Adrenal gland (tissue), 19 donors: ENCODE measurements at regions of chr6 and their contacts with region 1.

Region 1: GRCh38 chr6:130843575-130844320 is 16.5 kb downstream of the SMLR1 start:
- DNase-seq: no peak
- H3K4me3 ChIP-seq: no peak overlapping the region
- H3K27ac ChIP-seq: no peak overlapping the region
- H3K4me1 ChIP-seq: no peaks in the 10 kb centered on the region
- H3K27me3 ChIP-seq: no peaks in the 10 kb centered on the region
- CTCF ChIP-seq: peak; percentile 31 to 73 (median 66)
- POLR2A ChIP-seq: no peak

Region 2: DNA sequence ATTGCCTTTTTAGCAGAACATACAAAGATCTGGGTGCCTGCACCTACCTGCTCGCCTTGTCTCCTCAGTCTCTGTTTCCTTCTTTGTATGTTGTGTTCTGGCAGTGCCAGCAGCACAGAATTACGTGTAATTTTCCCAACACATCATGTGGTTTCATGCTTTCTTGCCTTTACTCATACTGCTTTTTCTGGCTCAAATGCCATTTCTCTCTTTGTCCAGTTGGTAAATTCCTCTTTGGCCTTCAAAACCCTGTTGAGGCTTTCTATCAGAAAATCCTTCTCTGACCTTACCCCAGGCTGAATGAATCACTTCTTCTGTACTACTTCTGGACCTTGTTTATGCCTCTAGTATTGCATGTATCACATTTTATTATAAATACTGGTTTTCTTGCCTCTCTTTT is 793.5 kb before region 1 on chr6:
- intact Hi-C with region 1: loop called in 1 of 2 experiments (anchors 10 kb)
- DNase-seq: peak in 3 of 7 donors; percentile 25 to 50 (median 35)
- H3K4me3 ChIP-seq: no peak overlapping the region
- H3K27ac ChIP-seq: peak overlapping the region in 4 of 5 donors; percentile 51 to 75 (median 61)
- H3K4me1 ChIP-seq: peaks cover 11 to 12% of the 10 kb centered on the region in 2 donors
- H3K27me3 ChIP-seq: no peaks in the 10 kb centered on the region
- CTCF ChIP-seq: peak in 1 of 6 experiments; percentile 5
- POLR2A ChIP-seq: no peak

Region 3: DNA sequence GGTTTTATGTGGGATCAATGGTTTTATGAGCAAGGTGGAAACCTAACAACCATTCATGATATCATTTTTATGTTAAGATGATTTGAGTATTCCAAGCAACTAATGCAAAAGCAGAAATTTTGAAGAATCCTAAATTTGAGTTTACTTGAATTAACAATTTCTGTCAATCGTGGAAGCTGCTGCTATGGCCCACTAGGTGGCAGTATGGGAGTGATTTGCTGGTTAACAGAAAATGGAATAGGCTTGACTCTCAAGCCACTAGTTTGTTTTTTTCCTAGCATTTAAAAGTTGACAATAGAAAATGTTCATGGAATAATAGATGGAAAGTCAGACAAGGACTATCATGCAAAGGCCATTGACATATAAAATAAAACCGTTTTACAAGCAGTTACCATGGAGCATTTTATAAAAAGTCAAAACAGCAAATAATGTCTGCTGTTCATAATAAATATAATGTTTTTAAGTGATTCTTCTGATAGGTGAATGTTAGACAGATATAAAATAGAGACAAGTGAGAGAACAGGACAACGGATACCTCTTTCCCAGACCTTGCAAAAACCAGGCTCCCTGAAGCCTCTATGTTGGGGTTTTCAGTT is 521.0 kb before region 1 on chr6:
- intact Hi-C with region 1: loop called in 1 of 2 experiments (anchors 10 kb)
- DNase-seq: peak; percentile 37 to 82 (median 57)
- H3K4me3 ChIP-seq: no peak overlapping the region
- H3K27ac ChIP-seq: no peak overlapping the region
- H3K4me1 ChIP-seq: no peaks in the 10 kb centered on the region
- H3K27me3 ChIP-seq: no peaks in the 10 kb centered on the region
- CTCF ChIP-seq: peak; percentile 74 to 92 (median 86)
- POLR2A ChIP-seq: no peak

Region 4: DNA sequence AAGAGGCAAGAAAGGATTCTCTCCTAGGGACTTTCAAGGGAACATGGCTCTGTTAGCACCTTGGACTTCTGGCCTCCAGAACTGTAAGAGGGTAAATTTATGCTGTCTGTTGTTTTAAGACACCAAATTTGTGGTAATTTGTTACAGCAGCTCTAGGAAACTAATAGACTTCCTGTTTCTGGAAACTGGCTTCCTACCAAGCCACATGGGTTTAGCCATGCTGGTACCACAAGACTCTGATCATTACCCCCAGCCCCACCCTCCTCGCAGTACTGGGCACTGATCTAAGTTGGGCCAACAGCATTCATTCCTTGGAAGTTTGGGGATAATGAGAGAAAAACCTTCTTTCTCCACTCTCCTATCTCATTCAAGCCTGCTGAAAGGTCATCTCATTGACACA is 126.1 kb before region 1 on chr6:
- intact Hi-C with region 1: no loop called
- DNase-seq: no peak
- H3K4me3 ChIP-seq: no peak overlapping the region
- H3K27ac ChIP-seq: no peak overlapping the region
- H3K4me1 ChIP-seq: no peaks in the 10 kb centered on the region
- H3K27me3 ChIP-seq: no peaks in the 10 kb centered on the region
- CTCF ChIP-seq: no peak
- POLR2A ChIP-seq: no peak